ENCODE measurements at regions of chr17 and their contacts with region 1.

Region 1: DNA sequence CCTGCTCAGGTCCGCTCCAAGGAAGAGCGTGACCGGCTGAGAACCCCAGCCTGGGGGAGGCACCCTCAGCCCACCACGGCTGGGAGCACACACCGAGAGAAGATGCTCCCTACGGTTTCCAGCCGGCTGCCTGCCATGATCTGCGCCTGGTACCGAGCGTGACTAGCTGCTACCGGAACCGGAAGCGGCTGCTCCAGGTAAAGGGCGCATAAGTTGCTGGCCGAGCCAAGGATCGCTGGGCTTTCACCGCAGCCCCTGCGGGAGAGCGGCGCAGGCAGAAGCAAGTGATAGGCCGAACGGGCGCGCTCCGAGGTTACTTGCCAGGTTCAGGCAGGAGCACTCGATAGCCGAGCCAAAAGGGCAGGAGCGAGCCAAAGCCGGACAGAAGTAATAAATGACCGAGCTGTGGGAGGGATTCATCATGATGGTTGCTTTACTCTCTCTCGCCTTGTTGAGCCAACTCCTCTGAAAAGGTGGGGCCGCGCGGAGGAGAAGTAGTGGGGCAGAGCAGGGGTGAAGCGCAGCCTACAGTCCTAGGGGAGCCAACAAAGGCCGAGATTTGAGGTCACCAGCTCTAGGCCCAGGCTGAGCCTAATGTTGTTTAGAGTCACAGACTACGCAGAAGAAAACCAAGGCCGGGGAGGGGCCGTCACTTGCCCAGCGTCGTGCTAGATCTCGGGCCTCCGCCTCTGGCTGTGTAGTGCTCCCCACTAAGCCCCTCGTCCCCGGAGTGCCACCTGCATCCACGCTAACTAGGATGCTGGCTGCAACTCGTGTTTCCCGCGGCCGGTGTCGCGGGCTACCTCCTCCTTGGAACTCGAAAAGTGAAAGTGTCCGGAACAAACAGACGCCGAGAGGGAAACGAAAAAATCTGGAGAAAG is at the start of gene MRPS23:
- DNase-seq: peak; percentile 87
- ATAC-seq: peak; percentile 95
- H3K4me3 Mint-ChIP-seq: peak within 1 kb of the TSS; percentile 93
- H3K27ac Mint-ChIP-seq: peak within 1 kb of the TSS; percentile 96
- H3K4me1 Mint-ChIP-seq: peaks cover 38% of the 10 kb centered on the region
- H3K27me3 Mint-ChIP-seq: no peaks in the 10 kb centered on the region
- CTCF ChIP-seq: no peak
- total RNA-seq, gene MRPS23: 37.9 and 47.4 TPM in 2 replicates

Region 2: GRCh38 chr17:57671667-57672632 is 178.2 kb before region 1 on chr17:
- CTCF ChIA-PET with region 1: no interaction called
- POLR2A ChIA-PET with region 1: no interaction called
- intact Hi-C with region 1: no loop called
- DNase-seq: peak; percentile 56
- ATAC-seq: peak; percentile 91
- H3K4me3 Mint-ChIP-seq: no peak overlapping the region
- H3K27ac Mint-ChIP-seq: no peak overlapping the region
- H3K4me1 Mint-ChIP-seq: peaks cover 8% of the 10 kb centered on the region
- H3K27me3 Mint-ChIP-seq: no peaks in the 10 kb centered on the region
- CTCF ChIP-seq: peak; percentile 88

Region 3: GRCh38 chr17:57724026-57724728 is 125.9 kb before region 1 on chr17:
- CTCF ChIA-PET with region 1: no interaction called
- POLR2A ChIA-PET with region 1: no interaction called
- intact Hi-C with region 1: no loop called
- DNase-seq: no peak
- ATAC-seq: peak; percentile 77
- H3K4me3 Mint-ChIP-seq: no peak overlapping the region
- H3K27ac Mint-ChIP-seq: no peak overlapping the region
- H3K4me1 Mint-ChIP-seq: peaks cover 30% of the 10 kb centered on the region
- H3K27me3 Mint-ChIP-seq: peaks cover 4% of the 10 kb centered on the region
- CTCF ChIP-seq: no peak

Region 4: DNA sequence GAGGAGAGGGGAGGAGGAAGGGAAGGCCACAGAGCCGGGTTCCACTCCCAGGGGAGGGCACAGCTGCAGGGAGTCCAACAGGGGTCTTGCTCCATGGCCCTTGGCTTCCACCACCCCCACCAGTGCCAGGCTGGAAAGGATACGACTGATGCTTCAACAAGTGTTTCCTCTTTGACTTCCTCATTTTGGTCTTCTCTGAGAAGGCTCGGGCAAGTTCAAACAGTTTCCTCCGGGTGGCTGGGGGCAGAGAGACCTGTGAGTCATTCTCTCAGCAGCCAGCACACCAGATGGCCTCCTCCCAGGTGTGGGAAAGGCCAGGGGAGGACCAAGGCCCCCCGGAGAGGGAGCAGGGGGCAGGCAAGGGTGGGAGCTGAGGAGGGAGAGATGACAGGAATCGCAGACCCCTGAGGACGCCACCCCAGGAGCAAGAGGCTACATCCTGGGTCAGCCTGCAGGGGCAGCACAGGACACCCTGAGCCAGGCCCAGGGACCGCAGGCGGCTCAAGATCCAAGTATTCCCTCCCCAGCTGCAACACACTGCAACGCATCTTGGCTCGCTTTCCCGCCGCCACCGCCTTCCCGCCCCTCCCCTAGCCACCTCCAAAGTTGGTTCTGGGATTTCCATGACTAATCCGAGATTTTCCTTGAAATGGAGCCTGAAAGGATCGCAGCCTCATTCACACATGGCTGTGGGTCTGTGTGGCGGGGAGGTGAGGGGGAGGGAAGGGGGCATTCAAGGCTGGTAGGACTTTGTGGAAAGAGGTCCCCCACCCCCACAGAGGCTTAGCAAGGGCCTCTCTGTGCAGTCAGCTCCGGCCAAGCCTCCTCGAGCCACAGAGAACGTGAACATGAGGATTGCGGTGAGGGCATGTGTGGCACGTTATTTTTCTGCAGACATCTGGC is 18.1 kb after region 1 on chr17:
- CTCF ChIA-PET with region 1: no interaction called
- POLR2A ChIA-PET with region 1: interaction called, 6 read pairs
- intact Hi-C with region 1: loop called (anchors 1 kb)
- DNase-seq: peak; percentile 53
- ATAC-seq: peak; percentile 94
- H3K4me3 Mint-ChIP-seq: peak overlapping the region; percentile 24
- H3K27ac Mint-ChIP-seq: peak overlapping the region; percentile 65
- H3K4me1 Mint-ChIP-seq: peaks cover 29% of the 10 kb centered on the region
- H3K27me3 Mint-ChIP-seq: peaks cover 20% of the 10 kb centered on the region
- CTCF ChIP-seq: no peak

Region 5: GRCh38 chr17:58082870-58083490 is 232.9 kb after region 1 on chr17 and contains the start of gene DYNLL2:
- CTCF ChIA-PET with region 1: no interaction called
- POLR2A ChIA-PET with region 1: interaction called, 23 read pairs
- intact Hi-C with region 1: loop called (anchors 1 kb)
- DNase-seq: peak; percentile 73
- ATAC-seq: peak; percentile 85
- H3K4me3 Mint-ChIP-seq: peak within 1 kb of the TSS; percentile 86
- H3K27ac Mint-ChIP-seq: peak within 1 kb of the TSS; percentile 80
- H3K4me1 Mint-ChIP-seq: peaks cover 35% of the 10 kb centered on the region
- H3K27me3 Mint-ChIP-seq: no peaks in the 10 kb centered on the region
- CTCF ChIP-seq: no peak
- total RNA-seq, gene DYNLL2: 19.5 and 19.6 TPM in 2 replicates

Region 6: GRCh38 chr17:59355696-59356325 is 1505.7 kb after region 1 on chr17:
- CTCF ChIA-PET with region 1: no interaction called
- POLR2A ChIA-PET with region 1: interaction called, 14 read pairs
- intact Hi-C with region 1: no loop called
- DNase-seq: no peak
- ATAC-seq: no peak
- H3K4me3 Mint-ChIP-seq: no peak overlapping the region
- H3K27ac Mint-ChIP-seq: no peak overlapping the region
- H3K4me1 Mint-ChIP-seq: peaks cover 76% of the 10 kb centered on the region
- H3K27me3 Mint-ChIP-seq: no peaks in the 10 kb centered on the region
- CTCF ChIP-seq: no peak